Lower lobe of right lung (tissue), 2 donors: ENCODE measurements at regions of chr11 and their contacts with region 1.

Region 1: GRCh38 chr11:14300661-14301304 is 58.2 kb downstream of the RRAS2 start:
- DNase-seq: no peak
- ATAC-seq: peak; percentile 86 to 91
- H3K4me3 ChIP-seq: no peak overlapping the region
- H3K27ac ChIP-seq: no peak overlapping the region
- H3K4me1 ChIP-seq: peaks cover 16% of the 10 kb centered on the region
- H3K27me3 ChIP-seq: no peaks in the 10 kb centered on the region
- CTCF ChIP-seq: peak; percentile 72

Region 2: GRCh38 chr11:13663631-13664071 is 637.1 kb before region 1 on chr11:
- intact Hi-C with region 1: no loop called
- DNase-seq: no peak
- ATAC-seq: no peak
- H3K4me3 ChIP-seq: no peak overlapping the region
- H3K27ac ChIP-seq: no peak overlapping the region
- H3K4me1 ChIP-seq: no peaks in the 10 kb centered on the region
- H3K27me3 ChIP-seq: no peaks in the 10 kb centered on the region
- CTCF ChIP-seq: no peak

Region 3: DNA sequence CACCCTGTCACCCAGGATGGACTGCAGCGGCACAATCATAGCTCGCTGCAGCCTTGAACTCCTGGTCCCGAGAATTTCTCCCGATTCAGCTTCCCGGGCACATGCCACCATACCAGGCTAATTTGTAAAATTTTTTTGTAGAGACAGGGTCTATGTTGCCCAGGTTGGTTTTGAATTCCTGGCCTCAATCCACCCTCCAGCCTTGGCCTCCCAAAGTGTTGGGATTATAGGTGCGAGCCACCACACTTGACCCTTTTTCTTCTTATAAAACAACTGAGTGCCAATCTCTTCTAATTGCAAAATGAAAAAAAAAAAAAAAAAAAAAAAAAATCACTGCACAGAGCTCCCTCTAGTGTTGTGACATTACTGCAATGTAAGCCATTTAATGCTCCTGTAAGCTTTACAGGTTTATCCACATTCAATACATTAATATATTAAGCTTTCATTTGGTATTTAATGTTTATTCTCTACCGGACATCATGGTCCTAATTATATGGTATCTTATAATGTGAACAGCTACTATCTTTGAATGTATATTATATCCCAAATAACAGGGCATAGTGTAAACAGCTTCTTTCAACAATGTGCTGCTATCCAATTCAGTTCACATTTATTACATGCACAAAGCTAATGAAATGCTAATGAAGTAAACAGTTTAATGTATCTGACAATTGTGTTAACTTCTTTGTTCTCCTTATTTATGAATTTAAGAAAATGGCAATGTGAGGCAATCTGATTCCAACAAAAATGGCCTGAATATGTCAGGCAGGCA is 154.3 kb after region 1 on chr11:
- intact Hi-C with region 1: loop called (anchors 10 kb)
- DNase-seq: no peak
- ATAC-seq: peak; percentile 59 to 64
- H3K4me3 ChIP-seq: no peak overlapping the region
- H3K27ac ChIP-seq: no peak overlapping the region
- H3K4me1 ChIP-seq: no peaks in the 10 kb centered on the region
- H3K27me3 ChIP-seq: no peaks in the 10 kb centered on the region
- CTCF ChIP-seq: peak; percentile 65